Heart right ventricle (tissue), 16 donors: ENCODE measurements at regions of chr1 and their contacts with region 1.

Region 1: GRCh38 chr1:87328272-87329050 is at the start of gene LMO4:
- DNase-seq: peak; percentile 94 to 97
- ATAC-seq: peak; percentile 86 to 95 (median 91)
- H3K4me3 ChIP-seq: peak within 1 kb of the TSS; percentile 64 to 88 (median 82)
- H3K27ac ChIP-seq: peak within 1 kb of the TSS; percentile 91 to 97 (median 96)
- H3K4me1 ChIP-seq: peaks cover 0 to 41% (median 22%) of the 10 kb centered on the region in 9 donors
- H3K27me3 ChIP-seq: no peaks in the 10 kb centered on the region
- CTCF ChIP-seq: no peak
- total RNA-seq, gene LMO4: 19.8 to 60.5 (median 27.7) TPM

Region 2: GRCh38 chr1:87151500-87152421 is 176.7 kb before region 1 on chr1:
- intact Hi-C with region 1: loop called in 1 of 10 experiments (anchors 5 kb)
- DNase-seq: peak; percentile 78 to 80
- ATAC-seq: peak; percentile 90 to 97 (median 94)
- H3K4me3 ChIP-seq: peak overlapping the region; percentile 6 to 45 (median 38)
- H3K27ac ChIP-seq: peak overlapping the region in 9 of 10 donors; percentile 3 to 71 (median 59)
- H3K4me1 ChIP-seq: peaks cover 2 to 44% (median 23%) of the 10 kb centered on the region in 9 donors
- H3K27me3 ChIP-seq: no peaks in the 10 kb centered on the region
- CTCF ChIP-seq: peak in 8 of 9 donors; percentile 43 to 79 (median 64)

Region 3: GRCh38 chr1:87478231-87478630 is 149.8 kb after region 1 on chr1:
- intact Hi-C with region 1: loop called in 1 of 10 experiments (anchors 10 kb)
- DNase-seq: peak; percentile 19 to 27
- ATAC-seq: peak in 5 of 8 donors; percentile 42 to 75 (median 59)
- H3K4me3 ChIP-seq: no peak overlapping the region
- H3K27ac ChIP-seq: no peak overlapping the region
- H3K4me1 ChIP-seq: no peaks in the 10 kb centered on the region
- H3K27me3 ChIP-seq: no peaks in the 10 kb centered on the region
- CTCF ChIP-seq: peak in 5 of 9 donors; percentile 25 to 49 (median 45)

Region 4: GRCh38 chr1:87953732-87954344 is 625.4 kb after region 1 on chr1:
- intact Hi-C with region 1: loop called in 9 of 10 experiments (anchors 2 to 5 kb)
- DNase-seq: peak; percentile 27 to 66
- ATAC-seq: peak; percentile 39 to 83 (median 72)
- H3K4me3 ChIP-seq: no peak overlapping the region
- H3K27ac ChIP-seq: no peak overlapping the region
- H3K4me1 ChIP-seq: peaks cover 0 to 24% (median 0%) of the 10 kb centered on the region in 9 donors
- H3K27me3 ChIP-seq: no peaks in the 10 kb centered on the region
- CTCF ChIP-seq: peak; percentile 50 to 89 (median 82)

Region 5: GRCh38 chr1:88061492-88062177 is 733.2 kb after region 1 on chr1:
- intact Hi-C with region 1: loop called in 5 of 10 experiments (anchors 2 to 10 kb)
- DNase-seq: peak in 1 of 2 donors; percentile 29
- ATAC-seq: peak in 6 of 8 donors; percentile 55 to 91 (median 60)
- H3K4me3 ChIP-seq: no peak overlapping the region
- H3K27ac ChIP-seq: no peak overlapping the region
- H3K4me1 ChIP-seq: no peaks in the 10 kb centered on the region
- H3K27me3 ChIP-seq: no peaks in the 10 kb centered on the region
- CTCF ChIP-seq: peak in 8 of 9 donors; percentile 44 to 71 (median 66)